ENCODE measurements at regions of chr10 and their contacts with region 1.

Region 1: GRCh38 chr10:124741281-124741921 is 2.8 kb downstream of the FAM53B start:
- DNase-seq: peak; percentile 82 to 91
- H3K4me3 ChIP-seq: peak overlapping the region; percentile 54
- H3K4me1 ChIP-seq: peaks cover 36% of the 10 kb centered on the region
- H3K27me3 ChIP-seq: no peaks in the 10 kb centered on the region

Region 2: DNA sequence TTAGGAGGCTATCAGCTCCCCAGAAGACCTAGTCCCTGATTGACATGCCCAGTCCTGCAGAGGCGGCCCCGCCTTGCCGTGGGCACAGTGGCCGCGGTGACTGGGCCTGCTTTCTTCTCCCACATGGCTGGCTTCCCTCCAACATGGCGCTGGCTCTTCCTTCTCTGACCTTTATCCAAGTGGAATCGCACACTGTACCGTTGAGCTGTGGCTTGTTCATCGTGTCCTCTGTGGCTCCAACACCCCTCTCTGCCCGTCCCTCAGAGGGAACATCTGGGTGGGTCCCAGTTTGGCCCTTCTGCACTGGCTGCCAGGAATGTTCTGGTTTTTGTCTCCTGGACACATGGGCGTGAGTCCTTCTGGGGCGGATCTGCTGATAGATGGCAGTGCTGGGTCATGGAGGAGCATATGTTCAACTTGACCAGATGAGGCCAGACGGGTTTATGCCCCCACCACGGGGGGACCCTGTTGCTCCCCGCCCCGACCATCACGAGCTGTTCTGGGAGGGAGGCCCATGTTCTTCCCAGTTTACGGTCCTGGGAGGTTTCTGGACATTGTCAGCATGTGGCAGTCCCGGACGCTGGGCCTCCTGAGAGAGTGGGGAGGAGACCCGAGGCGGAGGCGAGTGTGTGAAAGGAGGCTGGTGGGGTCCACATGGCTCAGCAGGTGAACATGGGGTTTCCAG is 216.3 kb before region 1 on chr10:
- in situ Hi-C with region 1: loop called (anchors 5 kb)
- DNase-seq: no peak
- H3K4me3 ChIP-seq: no peak overlapping the region
- H3K4me1 ChIP-seq: no peaks in the 10 kb centered on the region
- H3K27me3 ChIP-seq: no peaks in the 10 kb centered on the region

Region 3: GRCh38 chr10:124539935-124540641 is 201.3 kb before region 1 on chr10:
- in situ Hi-C with region 1: no loop called
- DNase-seq: peak; percentile 7 to 81
- H3K4me3 ChIP-seq: no peak overlapping the region
- H3K4me1 ChIP-seq: no peaks in the 10 kb centered on the region
- H3K27me3 ChIP-seq: no peaks in the 10 kb centered on the region

Region 4: DNA sequence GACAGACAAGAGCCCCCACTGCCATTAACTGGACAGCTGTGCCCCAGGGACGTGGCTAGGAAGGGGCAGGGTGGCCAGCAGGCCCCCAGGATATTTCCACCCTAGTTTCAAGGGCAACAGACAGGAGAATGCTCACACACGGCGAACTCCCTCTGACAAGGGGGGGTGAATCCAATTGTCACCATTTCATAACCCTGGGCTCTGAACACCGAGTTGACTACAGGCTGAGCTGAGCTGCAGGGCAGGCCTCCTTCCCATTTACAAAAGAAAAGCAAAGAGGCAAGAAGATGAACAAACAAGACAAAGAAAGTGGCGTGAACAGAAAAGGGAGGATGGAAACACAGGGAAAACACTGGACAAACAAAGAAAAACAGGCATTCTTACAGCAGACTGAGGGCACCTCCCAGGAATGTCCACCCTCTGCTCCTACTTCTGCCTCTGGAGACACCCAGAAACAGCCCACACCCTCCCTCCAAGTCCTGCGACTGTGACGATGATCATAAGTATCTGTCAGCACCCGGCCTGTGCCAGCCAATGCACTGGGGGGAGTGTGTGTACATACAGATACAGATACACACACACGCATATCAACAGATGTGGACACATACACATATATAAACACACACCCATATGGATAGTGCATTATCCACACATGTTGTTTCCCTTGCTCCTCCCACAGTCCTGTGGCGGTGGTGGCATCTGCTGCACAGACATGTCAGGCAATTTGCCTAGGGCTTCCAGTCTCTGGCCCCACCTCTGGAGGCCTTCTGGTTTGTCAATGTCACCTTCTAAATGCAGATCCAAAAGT is 63.4 kb before region 1 on chr10:
- in situ Hi-C with region 1: loop called (anchors 5 kb)
- DNase-seq: peak; percentile 65 to 66
- H3K4me3 ChIP-seq: no peak overlapping the region
- H3K4me1 ChIP-seq: peaks cover 17% of the 10 kb centered on the region
- H3K27me3 ChIP-seq: no peaks in the 10 kb centered on the region

Region 5: DNA sequence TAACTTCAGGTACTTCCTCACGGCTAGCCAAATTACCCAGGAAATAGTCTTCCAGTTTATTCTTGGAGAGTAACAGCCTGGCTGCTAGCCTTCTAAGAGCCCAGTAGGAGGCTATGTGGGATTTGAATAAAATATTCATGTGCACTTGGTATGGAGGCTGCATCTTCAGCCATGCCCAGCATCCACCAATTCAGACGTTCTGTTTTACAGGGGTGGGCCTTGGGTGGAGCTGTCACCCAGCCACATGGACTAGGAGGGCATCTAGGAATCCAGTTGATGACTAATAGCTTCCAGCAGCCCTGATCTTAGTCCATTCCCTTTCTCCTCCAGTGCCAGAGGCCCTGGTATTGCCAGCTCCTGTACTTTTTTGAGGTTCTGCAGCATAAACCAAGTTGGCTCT is 134.2 kb after region 1 on chr10:
- in situ Hi-C with region 1: no loop called
- DNase-seq: no peak
- H3K4me3 ChIP-seq: no peak overlapping the region
- H3K4me1 ChIP-seq: no peaks in the 10 kb centered on the region
- H3K27me3 ChIP-seq: no peaks in the 10 kb centered on the region